GM10248 (cell line): ENCODE measurements at regions of chrX and their contacts with region 1.

Region 1: GRCh38 chrX:123833387-123833786 is 26.5 kb upstream of the XIAP start:
- DNase-seq: peak; percentile 65
- CTCF ChIP-seq: peak; percentile 67

Region 2: DNA sequence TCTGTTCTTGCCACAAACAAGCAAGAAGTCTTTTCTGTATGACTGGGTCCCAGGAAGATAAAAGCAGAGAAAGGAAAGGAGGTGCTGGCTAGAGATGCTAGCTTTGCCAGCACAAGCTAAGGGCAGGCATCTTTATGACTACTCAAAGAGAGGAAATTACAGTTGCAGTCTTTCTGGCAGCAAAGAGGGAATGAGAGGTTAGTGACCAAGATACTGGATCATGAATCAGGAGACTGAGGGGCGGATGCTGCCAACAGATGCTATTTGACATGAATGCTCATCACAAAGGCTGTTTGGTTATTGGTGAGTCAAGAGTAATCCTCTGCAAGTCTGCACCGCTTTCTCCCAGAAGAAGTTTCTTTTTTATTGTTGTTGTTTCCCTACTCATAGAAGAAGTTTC is 20.9 kb after region 1 on chrX:
- CTCF ChIA-PET with region 1: interaction called, 13 read pairs
- POLR2A ChIA-PET with region 1: no interaction called
- DNase-seq: no peak
- CTCF ChIP-seq: no peak

Region 3: DNA sequence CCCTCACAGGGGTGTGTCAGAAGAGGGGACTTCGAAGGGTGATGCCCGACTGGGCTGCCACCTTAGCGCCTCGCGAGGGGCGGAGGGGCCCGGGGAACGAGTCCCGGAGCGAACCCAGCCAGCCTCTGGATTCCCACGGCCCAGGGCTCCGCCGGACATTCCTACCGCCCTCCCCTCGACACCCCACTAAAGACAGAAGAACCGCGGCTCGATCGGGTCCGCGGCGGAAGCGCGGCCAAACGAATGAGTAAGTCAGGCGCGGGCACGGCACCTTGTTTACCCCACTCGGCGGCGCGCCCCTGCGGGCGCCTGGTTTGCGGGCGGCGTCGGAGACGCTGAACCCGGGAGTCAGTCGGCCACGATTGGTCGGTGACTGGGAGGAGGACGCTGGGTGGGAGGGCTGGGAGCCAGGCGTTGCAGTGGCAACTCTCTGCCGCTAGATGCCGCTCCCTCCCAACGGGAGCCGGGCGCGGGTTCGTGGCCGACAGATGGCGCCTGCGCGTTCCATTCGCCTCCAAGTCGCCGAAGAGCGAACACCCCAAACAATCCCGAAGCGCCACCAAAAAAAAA is 126.7 kb after region 1 on chrX:
- CTCF ChIA-PET with region 1: interaction called, 13 read pairs
- POLR2A ChIA-PET with region 1: no interaction called
- DNase-seq: peak; percentile 87
- CTCF ChIP-seq: peak; percentile 88